ENCODE measurements at regions of chr2 and their contacts with region 1.

Region 1: GRCh38 chr2:47388888-47389287 is 14.1 kb upstream of the MSH2 start:
- DNase-seq: no peak
- H3K4me3 ChIP-seq: no peak overlapping the region
- H3K27ac ChIP-seq: no peak overlapping the region
- H3K4me1 ChIP-seq: no peaks in the 10 kb centered on the region
- H3K27me3 ChIP-seq: no peaks in the 10 kb centered on the region
- CTCF ChIP-seq: no peak

Region 2: GRCh38 chr2:47334356-47335136 is 54.3 kb before region 1 on chr2:
- intact Hi-C with region 1: loop called (anchors 1 kb)
- DNase-seq: no peak
- H3K4me3 ChIP-seq: no peak overlapping the region
- H3K27ac ChIP-seq: no peak overlapping the region
- H3K4me1 ChIP-seq: no peaks in the 10 kb centered on the region
- H3K27me3 ChIP-seq: no peaks in the 10 kb centered on the region
- CTCF ChIP-seq: no peak

Region 3: GRCh38 chr2:47675196-47675825 is 286.4 kb after region 1 on chr2:
- intact Hi-C with region 1: no loop called
- DNase-seq: no peak
- H3K4me3 ChIP-seq: no peak overlapping the region
- H3K27ac ChIP-seq: no peak overlapping the region
- H3K4me1 ChIP-seq: no peaks in the 10 kb centered on the region
- H3K27me3 ChIP-seq: no peaks in the 10 kb centered on the region
- CTCF ChIP-seq: no peak